ENCODE measurements at regions of chr19 and their contacts with region 1.

Region 1: GRCh38 chr19:5803752-5804515 is 933 bp upstream of the NRTN start:
- DNase-seq: peak; percentile 99
- ATAC-seq: peak; percentile 85
- H3K4me3 Mint-ChIP-seq: peak overlapping the region; percentile 75
- H3K27ac Mint-ChIP-seq: no peak overlapping the region
- H3K4me1 Mint-ChIP-seq: peaks cover 13% of the 10 kb centered on the region
- H3K27me3 Mint-ChIP-seq: peaks cover 47% of the 10 kb centered on the region
- CTCF ChIP-seq: peak; percentile 86; the same call in 1 of the 2 replicates

Region 2: GRCh38 chr19:5782945-5783934 is 20.7 kb before region 1 on chr19:
- CTCF ChIA-PET with region 1: interaction called, 16 read pairs
- POLR2A ChIA-PET with region 1: no interaction called
- DNase-seq: no peak
- ATAC-seq: no peak
- H3K4me3 Mint-ChIP-seq: no peak overlapping the region
- H3K27ac Mint-ChIP-seq: no peak overlapping the region
- H3K4me1 Mint-ChIP-seq: no peaks in the 10 kb centered on the region
- H3K27me3 Mint-ChIP-seq: no peaks in the 10 kb centered on the region
- CTCF ChIP-seq: no peak

Region 3: DNA sequence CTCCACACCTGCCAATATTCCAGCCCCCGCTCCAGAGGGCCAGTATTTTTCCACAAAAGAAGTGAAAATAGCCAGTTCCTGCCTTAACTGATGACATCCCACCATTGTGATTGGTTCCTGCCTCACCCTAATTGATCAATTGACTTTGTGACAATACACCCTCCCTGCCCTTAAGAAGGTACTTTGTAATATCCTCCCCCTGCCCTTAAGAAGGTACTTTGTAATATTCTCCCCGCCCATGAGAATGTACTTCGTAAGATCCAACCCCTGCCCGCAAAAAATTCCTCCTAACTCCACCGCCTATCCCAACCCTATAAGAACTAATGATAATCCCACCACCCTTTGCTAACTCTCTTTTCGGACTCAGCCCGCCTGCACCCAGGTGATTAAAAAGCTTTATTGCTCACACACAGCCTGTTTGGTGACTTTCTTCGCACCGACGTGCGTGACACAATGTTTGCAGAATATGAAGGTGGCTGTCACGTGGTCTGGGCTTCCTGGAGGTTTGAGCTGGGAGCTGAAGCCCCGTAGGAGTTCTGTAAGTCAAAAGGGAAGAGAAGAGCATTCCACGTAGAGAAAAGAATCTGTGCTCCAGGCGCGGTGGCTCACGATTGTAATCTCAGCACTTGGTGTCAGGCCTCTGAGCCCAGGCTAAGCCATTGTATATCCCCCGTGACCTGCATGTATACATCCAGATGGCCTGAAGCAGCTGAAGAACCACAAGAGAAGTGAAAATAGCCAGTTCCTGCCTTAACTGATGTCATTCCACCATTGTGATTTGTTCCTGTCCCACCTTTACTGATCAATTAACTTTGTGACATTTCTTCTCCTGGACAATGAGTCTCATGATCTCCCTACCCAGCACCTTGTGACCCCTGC is 53.5 kb after region 1 on chr19:
- CTCF ChIA-PET with region 1: interaction called, 16 read pairs
- POLR2A ChIA-PET with region 1: no interaction called
- DNase-seq: no peak
- ATAC-seq: no peak
- H3K4me3 Mint-ChIP-seq: no peak overlapping the region
- H3K27ac Mint-ChIP-seq: no peak overlapping the region
- H3K4me1 Mint-ChIP-seq: no peaks in the 10 kb centered on the region
- H3K27me3 Mint-ChIP-seq: peaks cover 9% of the 10 kb centered on the region
- CTCF ChIP-seq: no peak

Region 4: DNA sequence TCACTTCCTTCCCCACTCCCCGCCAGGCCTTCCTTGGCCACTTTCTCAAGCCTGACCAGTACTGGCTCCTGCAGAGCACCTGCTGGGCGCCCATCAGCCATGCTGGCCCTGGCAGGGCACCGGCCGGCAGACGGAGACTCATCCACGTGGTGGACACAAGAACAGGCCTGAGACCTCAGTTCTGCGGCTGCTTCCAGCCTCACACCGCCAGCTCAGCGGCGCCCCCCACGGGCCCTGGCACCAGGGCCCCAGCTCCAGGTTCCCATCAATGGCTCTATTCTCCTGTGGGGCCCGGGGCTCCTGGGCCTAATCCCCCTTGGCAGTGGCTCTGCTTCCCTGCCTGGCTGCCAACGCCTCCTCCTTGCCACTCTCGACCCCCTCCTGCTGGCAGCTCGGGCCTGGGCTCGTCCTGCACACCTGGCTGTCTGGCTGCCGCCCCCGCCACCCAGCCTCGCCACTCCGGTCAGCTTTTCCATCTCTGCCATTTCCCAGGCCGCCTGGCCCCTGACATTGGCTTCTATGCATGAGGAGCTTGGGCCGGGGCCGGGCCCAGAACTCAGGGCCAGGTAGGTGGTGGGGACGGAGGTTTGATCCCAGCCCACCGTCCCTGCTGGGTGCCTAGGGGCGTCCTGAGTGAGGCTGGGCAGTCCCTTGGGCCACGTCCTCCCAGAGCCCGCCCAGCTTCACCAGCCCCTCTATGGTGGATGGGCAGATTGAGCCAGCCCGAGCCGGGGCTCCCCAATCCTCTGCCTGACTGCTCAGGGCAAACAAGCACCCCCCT is 93.4 kb after region 1 on chr19:
- CTCF ChIA-PET with region 1: interaction called, 83 read pairs
- POLR2A ChIA-PET with region 1: interaction called, 3 read pairs
- DNase-seq: peak; percentile 42
- ATAC-seq: peak; percentile 36
- H3K4me3 Mint-ChIP-seq: no peak overlapping the region
- H3K27ac Mint-ChIP-seq: no peak overlapping the region
- H3K4me1 Mint-ChIP-seq: 0 out of 2 replicates have a peak, but pooled peaks cover under 1% of the 10 kb centered on the region
- H3K27me3 Mint-ChIP-seq: no peaks in the 10 kb centered on the region
- CTCF ChIP-seq: 0 out of 2 replicates have a peak, but pooled peaks have one; percentile 17

Region 5: GRCh38 chr19:5959666-5960338 is 155.9 kb after region 1 on chr19:
- CTCF ChIA-PET with region 1: interaction called, 11 read pairs
- POLR2A ChIA-PET with region 1: no interaction called
- DNase-seq: no peak
- ATAC-seq: no peak
- H3K4me3 Mint-ChIP-seq: no peak overlapping the region
- H3K27ac Mint-ChIP-seq: peak overlapping the region; percentile 88
- H3K4me1 Mint-ChIP-seq: peaks cover 80% of the 10 kb centered on the region
- H3K27me3 Mint-ChIP-seq: no peaks in the 10 kb centered on the region
- CTCF ChIP-seq: no peak

Region 6: GRCh38 chr19:5987077-5987818 is 183.3 kb after region 1 on chr19:
- CTCF ChIA-PET with region 1: interaction called, 15 read pairs
- POLR2A ChIA-PET with region 1: no interaction called
- DNase-seq: peak; percentile 84
- ATAC-seq: peak; percentile 46
- H3K4me3 Mint-ChIP-seq: no peak overlapping the region
- H3K27ac Mint-ChIP-seq: peak overlapping the region; percentile 46; the same call in 1 of the 2 replicates
- H3K4me1 Mint-ChIP-seq: peaks cover 12% of the 10 kb centered on the region
- H3K27me3 Mint-ChIP-seq: peaks cover 4% of the 10 kb centered on the region
- CTCF ChIP-seq: peak; percentile 90

Region 7: DNA sequence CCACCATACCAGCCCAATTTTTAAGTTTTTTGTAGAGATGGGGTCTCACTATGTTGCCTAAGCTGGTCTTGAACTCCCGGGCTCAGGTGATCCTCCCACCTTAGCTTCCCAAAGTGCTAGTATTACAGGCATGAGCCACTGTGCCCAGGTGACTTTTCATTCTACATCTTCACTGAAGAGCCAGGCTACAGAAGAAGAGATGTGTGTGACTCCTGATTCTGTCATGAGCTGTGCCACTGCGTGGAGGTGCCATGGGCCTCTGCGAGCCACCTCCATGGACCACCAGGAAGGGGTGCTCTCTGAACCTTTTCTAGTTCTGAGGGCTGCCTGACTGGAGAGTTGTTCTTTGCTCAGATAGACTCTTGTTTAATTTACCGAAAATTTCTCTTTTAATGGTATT is 230.6 kb after region 1 on chr19:
- CTCF ChIA-PET with region 1: no interaction called
- POLR2A ChIA-PET with region 1: no interaction called
- DNase-seq: no peak
- ATAC-seq: no peak
- H3K4me3 Mint-ChIP-seq: no peak overlapping the region
- H3K27ac Mint-ChIP-seq: no peak overlapping the region
- H3K4me1 Mint-ChIP-seq: no peaks in the 10 kb centered on the region
- H3K27me3 Mint-ChIP-seq: peaks cover 3% of the 10 kb centered on the region
- CTCF ChIP-seq: no peak